ENCODE measurements at regions of chr10 and their contacts with region 1.

Region 1: GRCh38 chr10:70880077-70880534 is 8.3 kb downstream of the PCBD1 start:
- DNase-seq: peak; percentile 59 to 76
- H3K4me3 ChIP-seq: no peak overlapping the region
- H3K27ac ChIP-seq: no peak overlapping the region
- H3K4me1 ChIP-seq: 0 out of 2 replicates have a peak, but pooled peaks cover 8% of the 10 kb centered on the region
- H3K27me3 ChIP-seq: no peaks in the 10 kb centered on the region
- CTCF ChIP-seq: peak; percentile 97

Region 2: GRCh38 chr10:70619271-70620019 is 260.7 kb before region 1 on chr10:
- CTCF ChIA-PET with region 1: no interaction called
- POLR2A ChIA-PET with region 1: interaction called, 4 read pairs
- intact Hi-C with region 1: loop called (anchors 5 kb)
- DNase-seq: peak in 1 of 2 experiments; percentile 37
- H3K4me3 ChIP-seq: no peak overlapping the region
- H3K27ac ChIP-seq: no peak overlapping the region
- H3K4me1 ChIP-seq: no peaks in the 10 kb centered on the region
- H3K27me3 ChIP-seq: no peaks in the 10 kb centered on the region
- CTCF ChIP-seq: peak; percentile 69

Region 3: DNA sequence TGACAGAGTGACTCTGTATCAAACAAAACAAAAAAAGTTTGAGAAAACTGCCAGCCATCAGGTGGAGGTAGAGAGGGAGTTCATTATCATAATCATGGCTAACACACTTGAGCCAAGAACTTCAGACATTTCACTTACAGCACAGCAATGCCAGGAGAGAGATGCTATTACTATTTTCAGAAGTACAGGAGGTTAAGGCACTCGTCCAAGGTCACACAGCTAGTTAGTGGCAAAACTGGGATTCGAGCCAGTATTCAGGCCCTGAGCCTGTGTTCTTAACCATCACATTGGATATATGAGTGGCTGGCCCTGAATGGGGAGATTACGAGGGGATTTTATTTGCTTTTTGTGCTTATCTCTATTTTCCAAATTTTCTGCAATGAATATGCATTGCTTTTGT is 307.5 kb after region 1 on chr10:
- CTCF ChIA-PET with region 1: no interaction called
- POLR2A ChIA-PET with region 1: no interaction called
- intact Hi-C with region 1: no loop called
- DNase-seq: no peak
- H3K4me3 ChIP-seq: no peak overlapping the region
- H3K27ac ChIP-seq: no peak overlapping the region
- H3K4me1 ChIP-seq: no peaks in the 10 kb centered on the region
- H3K27me3 ChIP-seq: peaks cover 39% of the 10 kb centered on the region
- CTCF ChIP-seq: no peak

Measured in PC-9 (cell line).